Heart left ventricle (tissue), 16 donors: ENCODE measurements at regions of chr4 and their contacts with region 1.

Region 1: DNA sequence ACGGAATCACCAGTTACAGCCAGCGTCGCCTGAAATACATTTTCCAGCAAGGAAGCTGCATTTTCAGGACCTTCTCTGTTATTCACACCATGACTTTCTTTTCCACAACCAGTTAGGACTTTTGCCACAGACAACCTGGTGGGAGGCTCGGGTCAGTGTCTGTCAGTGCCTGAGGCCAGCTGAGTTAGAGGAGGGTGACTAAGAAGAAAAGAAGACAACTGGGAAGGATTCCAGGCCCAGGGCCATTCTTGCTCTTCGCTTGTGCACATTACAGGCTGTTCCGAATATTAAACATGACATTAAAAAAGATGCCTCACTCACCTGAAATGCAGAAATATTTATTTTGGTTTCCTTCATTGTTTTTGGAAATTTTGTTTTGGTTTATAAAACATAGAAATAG is 21.4 kb upstream of the CENPU start:
- DNase-seq: peak in 2 of 5 donors; percentile 50 to 83
- ATAC-seq: peak in 3 of 4 donors; percentile 62 to 74 (median 68)
- H3K4me3 ChIP-seq: no peak overlapping the region
- H3K27ac ChIP-seq: peak overlapping the region in 11 of 12 donors; percentile 44 to 76 (median 66)
- H3K4me1 ChIP-seq: peaks cover 4 to 54% (median 41%) of the 10 kb centered on the region in 12 donors
- H3K27me3 ChIP-seq: no peaks in the 10 kb centered on the region
- CTCF ChIP-seq: no peak
- POLR2A ChIP-seq: no peak

Region 2: DNA sequence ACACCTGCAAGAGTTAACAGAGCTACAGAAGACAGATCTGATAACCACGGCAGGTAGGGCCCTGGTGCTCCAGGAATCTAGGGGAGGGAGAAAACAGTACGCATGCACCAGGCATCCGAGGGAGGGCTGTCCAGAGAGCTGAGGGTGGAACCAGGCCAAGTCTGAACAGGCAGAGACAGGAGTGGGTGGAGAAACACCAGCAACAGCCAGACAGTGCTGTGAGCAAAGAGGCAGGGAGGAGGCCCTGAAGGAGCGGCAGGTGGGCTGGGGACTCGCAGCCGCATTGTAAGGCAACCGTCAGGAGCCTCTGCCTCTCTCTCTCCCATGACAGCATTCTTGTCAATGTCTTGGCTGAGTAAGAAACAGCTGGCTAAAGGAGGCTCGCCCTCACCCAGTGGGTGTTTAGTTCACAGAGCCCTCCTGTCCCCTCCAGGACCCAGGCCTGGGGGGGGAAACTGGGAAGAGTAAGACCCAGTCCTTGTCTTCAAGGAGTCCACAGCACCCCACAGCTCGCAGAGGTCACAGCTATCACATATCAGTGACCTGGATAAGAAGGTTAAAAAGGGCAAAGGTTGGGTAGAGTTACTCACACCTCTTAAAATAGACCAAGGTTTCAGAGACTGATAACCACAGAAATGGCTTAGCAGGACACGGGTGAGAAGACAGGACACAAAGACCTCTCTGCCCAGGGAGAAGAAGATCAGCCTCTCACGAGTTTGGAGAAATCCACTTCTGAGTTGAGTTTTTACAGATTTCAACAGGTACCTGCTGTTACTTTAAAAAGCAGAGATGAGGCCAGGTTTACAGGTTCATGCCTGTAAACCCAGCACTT is 60.0 kb after region 1 on chr4:
- intact Hi-C with region 1: loop called in 2 of 10 experiments (anchors 5 kb)
- DNase-seq: peak; percentile 80 to 93 (median 84)
- ATAC-seq: peak; percentile 78 to 85 (median 80)
- H3K4me3 ChIP-seq: peak overlapping the region in 4 of 12 donors; percentile 3 to 13 (median 4)
- H3K27ac ChIP-seq: peak overlapping the region; percentile 78 to 98 (median 92)
- H3K4me1 ChIP-seq: peaks cover 0 to 100% (median 71%) of the 10 kb centered on the region in 12 donors
- H3K27me3 ChIP-seq: no peaks in the 10 kb centered on the region
- CTCF ChIP-seq: no peak
- POLR2A ChIP-seq: peak in 1 of 2 donors; percentile 57

Region 3: GRCh38 chr4:184899261-184900134 is 144.2 kb after region 1 on chr4:
- intact Hi-C with region 1: loop called in 1 of 10 experiments (anchors 10 kb)
- DNase-seq: peak in 2 of 5 donors; percentile 36 to 44
- ATAC-seq: peak in 3 of 4 donors; percentile 47 to 65 (median 59)
- H3K4me3 ChIP-seq: no peak overlapping the region
- H3K27ac ChIP-seq: no peak overlapping the region
- H3K4me1 ChIP-seq: peaks cover 0 to 52% (median 4%) of the 10 kb centered on the region in 12 donors
- H3K27me3 ChIP-seq: peaks cover 0 to 3% (median 0%) of the 10 kb centered on the region in 9 donors
- CTCF ChIP-seq: no peak
- POLR2A ChIP-seq: no peak